ENCODE measurements at regions of chr16 and their contacts with region 1.

Region 1: GRCh38 chr16:4253394-4254150 is 11.7 kb upstream of the SRL start:
- DNase-seq: peak; percentile 97
- ATAC-seq: peak; percentile 95
- H3K4me3 ChIP-seq: peak overlapping the region; percentile 68 to 84
- H3K27ac ChIP-seq: peak overlapping the region; percentile 81
- H3K4me1 ChIP-seq: peaks cover 0 to 6% of the 10 kb centered on the region in 2 experiments; a peak in 3 of 4 replicates
- H3K27me3 ChIP-seq: no peaks in the 10 kb centered on the region
- CTCF ChIP-seq: no peak
- POLR2A ChIP-seq: peak; percentile 96
- RAD21 ChIP-seq: peak; percentile 99

Region 2: GRCh38 chr16:3938848-3939624 is 314.5 kb before region 1 on chr16:
- CTCF ChIA-PET with region 1: interaction called, 15 read pairs
- POLR2A ChIA-PET with region 1: interaction called, 3 read pairs
- RAD21 ChIA-PET with region 1: no interaction called
- intact Hi-C with region 1: no loop called
- DNase-seq: no peak
- ATAC-seq: peak; percentile 96
- H3K4me3 ChIP-seq: peak overlapping the region; percentile 17 to 46
- H3K27ac ChIP-seq: no peak overlapping the region
- H3K4me1 ChIP-seq: peaks cover 0 to 15% of the 10 kb centered on the region in 2 experiments; a peak in 2 of 4 replicates
- H3K27me3 ChIP-seq: no peaks in the 10 kb centered on the region
- CTCF ChIP-seq: peak; percentile 77 to 95 (median 92); a peak in 5 of 6 replicates
- POLR2A ChIP-seq: no peak
- RAD21 ChIP-seq: peak; percentile 61

Region 3: GRCh38 chr16:4136229-4136813 is 117.3 kb before region 1 on chr16:
- CTCF ChIA-PET with region 1: no interaction called
- POLR2A ChIA-PET with region 1: interaction called, 3 read pairs
- RAD21 ChIA-PET with region 1: no interaction called
- intact Hi-C with region 1: loop called (anchors 5 kb)
- DNase-seq: peak; percentile 71
- ATAC-seq: peak; percentile 93
- H3K4me3 ChIP-seq: peak overlapping the region in 1 of 2 experiments; percentile 14; a peak in 1 of 4 replicates
- H3K27ac ChIP-seq: peak overlapping the region; percentile 19
- H3K4me1 ChIP-seq: peaks cover 18 to 27% of the 10 kb centered on the region in 2 experiments
- H3K27me3 ChIP-seq: no peaks in the 10 kb centered on the region
- CTCF ChIP-seq: peak in 2 of 3 experiments; percentile 29 to 38; a peak in 4 of 6 replicates
- POLR2A ChIP-seq: no peak
- RAD21 ChIP-seq: no peak

Region 4: DNA sequence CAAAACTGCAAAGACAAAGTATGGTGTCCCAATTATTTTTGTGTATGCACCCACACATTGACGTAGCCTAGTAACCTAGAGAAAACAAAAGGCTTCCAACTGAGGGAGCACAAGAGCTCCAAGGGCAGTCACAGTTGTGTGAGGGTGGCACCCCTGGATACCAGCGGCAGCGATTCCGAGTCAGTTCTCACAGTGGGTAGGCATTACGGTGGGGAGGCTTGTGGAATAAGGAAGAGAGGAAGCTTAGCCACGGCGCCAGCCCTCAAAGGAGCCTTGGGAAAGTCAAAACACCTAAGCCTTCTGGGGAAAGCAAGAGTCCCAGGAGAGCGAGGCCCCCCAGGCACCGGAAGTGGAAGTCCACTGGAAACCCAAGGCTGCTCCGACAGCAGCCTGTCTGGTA is 106.3 kb before region 1 on chr16:
- CTCF ChIA-PET with region 1: no interaction called
- POLR2A ChIA-PET with region 1: no interaction called
- RAD21 ChIA-PET with region 1: no interaction called
- intact Hi-C with region 1: no loop called
- DNase-seq: no peak
- ATAC-seq: no peak
- H3K4me3 ChIP-seq: no peak overlapping the region
- H3K27ac ChIP-seq: no peak overlapping the region
- H3K4me1 ChIP-seq: no peaks in the 10 kb centered on the region
- H3K27me3 ChIP-seq: no peaks in the 10 kb centered on the region
- CTCF ChIP-seq: no peak
- POLR2A ChIP-seq: no peak
- RAD21 ChIP-seq: no peak

Region 5: GRCh38 chr16:4200000-4200780 is 53.4 kb before region 1 on chr16:
- CTCF ChIA-PET with region 1: interaction called, 28 read pairs
- POLR2A ChIA-PET with region 1: interaction called, 3 read pairs
- RAD21 ChIA-PET with region 1: interaction called, 6 to 8 read pairs
- intact Hi-C with region 1: no loop called
- DNase-seq: peak; percentile 31
- ATAC-seq: peak; percentile 93
- H3K4me3 ChIP-seq: peak overlapping the region in 1 of 2 experiments; percentile 18; a peak in 1 of 4 replicates
- H3K27ac ChIP-seq: no peak overlapping the region
- H3K4me1 ChIP-seq: peaks cover 9 to 10% of the 10 kb centered on the region in 2 experiments
- H3K27me3 ChIP-seq: no peaks in the 10 kb centered on the region
- CTCF ChIP-seq: peak; percentile 32 to 84 (median 49); a peak in 5 of 6 replicates
- POLR2A ChIP-seq: no peak
- RAD21 ChIP-seq: peak; percentile 88

Region 6: GRCh38 chr16:4307215-4308037 is 53.9 kb after region 1 on chr16:
- CTCF ChIA-PET with region 1: interaction called, 11 read pairs
- POLR2A ChIA-PET with region 1: no interaction called
- RAD21 ChIA-PET with region 1: no interaction called
- intact Hi-C with region 1: no loop called
- DNase-seq: peak; percentile 92
- ATAC-seq: peak; percentile 89
- H3K4me3 ChIP-seq: peak overlapping the region; percentile 63 to 80
- H3K27ac ChIP-seq: peak overlapping the region; percentile 45
- H3K4me1 ChIP-seq: peaks cover 20 to 44% of the 10 kb centered on the region in 2 experiments
- H3K27me3 ChIP-seq: no peaks in the 10 kb centered on the region
- CTCF ChIP-seq: no peak
- POLR2A ChIP-seq: peak; percentile 27
- RAD21 ChIP-seq: no peak

Region 7: GRCh38 chr16:4402439-4403132 is 149.0 kb after region 1 on chr16:
- CTCF ChIA-PET with region 1: interaction called, 21 read pairs
- POLR2A ChIA-PET with region 1: no interaction called
- RAD21 ChIA-PET with region 1: interaction called, 3 to 4 read pairs
- intact Hi-C with region 1: no loop called
- DNase-seq: peak; percentile 35
- ATAC-seq: peak; percentile 91
- H3K4me3 ChIP-seq: peak overlapping the region in 1 of 2 experiments; percentile 34; a peak in 2 of 4 replicates
- H3K27ac ChIP-seq: no peak overlapping the region; the same call in 1 of the 2 replicates
- H3K4me1 ChIP-seq: peaks cover 10 to 11% of the 10 kb centered on the region in 2 experiments; a peak in 3 of 4 replicates
- H3K27me3 ChIP-seq: no peaks in the 10 kb centered on the region
- CTCF ChIP-seq: peak; percentile 90 to 96 (median 94)
- POLR2A ChIP-seq: no peak
- RAD21 ChIP-seq: peak; percentile 98

Measured in HCT116 (cell line).